ENCODE measurements at regions of chr20 and their contacts with region 1.

Region 1: GRCh38 chr20:38875175-38875993 is 50.8 kb upstream of the FAM83D start:
- DNase-seq: peak; percentile 60
- H3K4me3 Mint-ChIP-seq: peak overlapping the region; percentile 34
- H3K27ac Mint-ChIP-seq: peak overlapping the region; percentile 91
- H3K4me1 Mint-ChIP-seq: peaks cover 71% of the 10 kb centered on the region
- H3K27me3 Mint-ChIP-seq: no peaks in the 10 kb centered on the region

Region 2: DNA sequence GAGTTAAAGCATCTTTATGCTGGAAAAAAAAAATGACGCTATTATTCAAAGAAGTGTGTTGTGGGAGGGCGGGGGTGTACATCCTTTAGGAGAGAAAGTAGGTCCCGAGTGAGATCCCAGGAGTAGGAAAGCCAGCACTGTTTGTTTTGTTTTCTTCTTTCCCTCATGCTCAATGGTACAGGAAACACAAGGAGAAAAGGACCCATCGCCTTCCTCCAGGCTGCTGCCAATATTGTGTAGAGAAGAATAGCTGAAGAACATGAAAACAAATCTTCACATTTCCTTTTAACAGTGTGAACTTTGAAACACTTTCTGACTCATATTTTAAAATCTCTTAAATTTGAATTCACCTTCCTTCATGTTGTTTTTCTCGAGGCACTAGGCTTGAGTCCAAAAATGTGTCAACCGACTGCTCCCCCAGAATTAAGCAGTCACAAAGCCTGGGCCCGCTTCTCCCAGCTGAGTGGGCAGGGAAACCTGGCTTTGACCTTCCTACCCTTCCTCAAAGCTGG is 47.6 kb before region 1 on chr20:
- CTCF ChIA-PET with region 1: no interaction called
- intact Hi-C with region 1: loop called (anchors 1 kb)
- DNase-seq: peak; percentile 43
- H3K4me3 Mint-ChIP-seq: no peak overlapping the region
- H3K27ac Mint-ChIP-seq: peak overlapping the region; percentile 89
- H3K4me1 Mint-ChIP-seq: peaks cover 74% of the 10 kb centered on the region
- H3K27me3 Mint-ChIP-seq: no peaks in the 10 kb centered on the region

Region 3: DNA sequence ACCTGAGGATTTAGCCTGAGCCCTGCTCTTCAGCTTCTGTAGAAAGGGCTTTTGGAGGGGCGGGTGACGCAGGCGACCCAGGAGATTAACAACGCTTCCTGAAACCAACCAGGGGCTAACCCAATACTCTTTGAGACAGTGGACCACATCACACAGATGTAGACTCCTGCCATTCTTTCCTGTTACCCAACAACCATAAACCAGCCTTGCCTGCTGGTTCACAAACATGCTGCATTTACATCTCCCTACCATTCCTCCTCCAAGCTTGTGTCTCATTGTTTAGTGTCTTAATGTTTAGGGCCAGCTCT is 41.6 kb before region 1 on chr20:
- CTCF ChIA-PET with region 1: interaction called, 4 read pairs
- intact Hi-C with region 1: loop called (anchors 2 kb)
- DNase-seq: peak; percentile 50
- H3K4me3 Mint-ChIP-seq: no peak overlapping the region
- H3K27ac Mint-ChIP-seq: peak overlapping the region; percentile 73
- H3K4me1 Mint-ChIP-seq: peaks cover 60% of the 10 kb centered on the region
- H3K27me3 Mint-ChIP-seq: no peaks in the 10 kb centered on the region

Region 4: DNA sequence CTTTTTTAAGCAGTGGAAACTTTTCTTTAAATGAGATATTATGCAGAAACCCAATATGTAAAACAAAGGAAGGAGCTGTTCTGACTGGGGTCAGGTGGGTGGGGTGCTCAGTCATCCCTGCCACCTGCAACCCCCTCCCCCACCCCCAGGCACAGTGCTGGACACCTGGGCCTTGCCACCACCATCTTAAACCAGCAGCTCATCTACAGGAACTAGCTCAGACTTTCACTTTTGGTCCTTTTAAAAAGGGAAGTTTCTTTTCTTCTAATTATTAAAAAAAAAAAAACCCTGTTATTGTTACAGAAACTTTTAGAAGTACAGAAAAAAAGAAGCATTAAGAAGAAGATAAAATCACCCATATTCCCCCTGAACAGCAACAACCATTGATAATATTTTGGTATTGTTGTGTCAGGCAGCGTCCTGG is 32.8 kb before region 1 on chr20:
- CTCF ChIA-PET with region 1: interaction called, 4 read pairs
- intact Hi-C with region 1: loop called (anchors 1 kb)
- DNase-seq: peak; percentile 84
- H3K4me3 Mint-ChIP-seq: no peak overlapping the region
- H3K27ac Mint-ChIP-seq: peak overlapping the region; percentile 91
- H3K4me1 Mint-ChIP-seq: peaks cover 73% of the 10 kb centered on the region
- H3K27me3 Mint-ChIP-seq: no peaks in the 10 kb centered on the region

Region 5: DNA sequence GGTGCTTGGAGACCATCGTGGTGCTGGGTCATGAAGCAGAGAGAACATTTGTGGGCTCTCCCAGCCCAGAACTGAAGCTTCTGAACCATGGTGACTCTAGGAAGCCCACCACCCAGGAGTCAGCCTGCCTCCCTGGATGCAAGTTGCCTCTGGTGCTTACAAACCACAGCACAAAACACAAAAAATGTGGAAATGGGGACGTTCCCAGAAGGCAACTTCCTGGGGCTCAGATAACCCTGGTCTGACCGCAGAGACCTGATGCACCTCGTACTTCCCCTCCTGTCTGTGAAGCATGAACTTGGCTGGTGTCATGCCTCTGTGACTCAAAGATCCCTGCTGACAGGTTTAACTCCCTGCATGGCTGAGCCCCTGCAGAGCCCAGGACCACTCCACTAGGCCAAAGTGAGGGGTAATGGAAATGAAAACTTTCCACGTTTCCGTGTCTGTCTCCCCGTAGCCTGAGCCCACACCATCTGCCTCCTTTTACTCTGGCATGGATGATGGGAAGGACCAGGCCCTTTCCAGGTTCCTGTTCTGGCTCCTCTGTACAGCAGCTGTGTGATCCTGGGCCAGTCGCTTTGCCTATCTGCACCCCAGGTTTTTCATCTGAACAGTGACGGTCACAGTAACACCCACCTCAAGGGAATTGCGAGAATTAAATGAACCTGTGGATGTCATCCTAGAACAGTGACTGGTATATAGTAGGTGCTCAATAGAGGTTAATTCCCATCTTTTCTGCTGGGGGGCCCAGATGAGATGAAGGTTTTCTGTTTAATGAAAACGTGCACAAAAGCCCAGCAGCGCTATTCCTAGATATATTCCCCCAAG is 12.1 kb before region 1 on chr20:
- CTCF ChIA-PET with region 1: interaction called, 4 read pairs
- intact Hi-C with region 1: loop called (anchors 1 kb)
- DNase-seq: peak; percentile 81
- H3K4me3 Mint-ChIP-seq: peak overlapping the region; percentile 9
- H3K27ac Mint-ChIP-seq: peak overlapping the region; percentile 78
- H3K4me1 Mint-ChIP-seq: peaks cover 49% of the 10 kb centered on the region
- H3K27me3 Mint-ChIP-seq: no peaks in the 10 kb centered on the region

Region 6: DNA sequence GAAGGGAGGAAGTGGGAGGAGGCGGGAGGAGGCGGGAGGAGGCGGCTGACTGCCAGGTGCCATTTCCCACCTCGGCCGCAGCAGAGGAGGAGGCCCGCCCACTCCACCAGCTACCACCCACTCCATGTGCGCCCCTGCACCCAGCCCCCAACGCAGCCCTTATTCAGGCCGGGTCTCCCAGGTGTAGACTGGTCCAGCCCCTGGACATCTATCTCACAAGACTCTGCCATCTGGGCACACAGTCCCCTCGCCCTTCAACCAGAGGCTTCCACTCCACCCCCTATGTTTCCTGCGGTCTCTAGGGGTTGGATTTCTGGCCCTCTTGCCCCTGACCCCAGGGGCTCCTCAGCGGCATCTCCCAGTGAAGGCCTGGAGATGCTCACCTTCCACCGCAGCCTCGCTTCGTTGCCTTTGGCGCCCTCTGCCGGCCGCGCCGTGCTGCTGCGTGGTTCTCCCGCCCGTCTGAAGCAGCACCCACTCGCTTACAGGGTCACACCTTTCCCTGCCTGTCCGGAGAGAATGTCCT is 18.2 kb after region 1 on chr20:
- CTCF ChIA-PET with region 1: interaction called, 22 read pairs
- intact Hi-C with region 1: loop called (anchors 1 kb)
- DNase-seq: peak; percentile 85
- H3K4me3 Mint-ChIP-seq: no peak overlapping the region
- H3K27ac Mint-ChIP-seq: peak overlapping the region; percentile 42
- H3K4me1 Mint-ChIP-seq: peaks cover 33% of the 10 kb centered on the region
- H3K27me3 Mint-ChIP-seq: no peaks in the 10 kb centered on the region

Region 7: DNA sequence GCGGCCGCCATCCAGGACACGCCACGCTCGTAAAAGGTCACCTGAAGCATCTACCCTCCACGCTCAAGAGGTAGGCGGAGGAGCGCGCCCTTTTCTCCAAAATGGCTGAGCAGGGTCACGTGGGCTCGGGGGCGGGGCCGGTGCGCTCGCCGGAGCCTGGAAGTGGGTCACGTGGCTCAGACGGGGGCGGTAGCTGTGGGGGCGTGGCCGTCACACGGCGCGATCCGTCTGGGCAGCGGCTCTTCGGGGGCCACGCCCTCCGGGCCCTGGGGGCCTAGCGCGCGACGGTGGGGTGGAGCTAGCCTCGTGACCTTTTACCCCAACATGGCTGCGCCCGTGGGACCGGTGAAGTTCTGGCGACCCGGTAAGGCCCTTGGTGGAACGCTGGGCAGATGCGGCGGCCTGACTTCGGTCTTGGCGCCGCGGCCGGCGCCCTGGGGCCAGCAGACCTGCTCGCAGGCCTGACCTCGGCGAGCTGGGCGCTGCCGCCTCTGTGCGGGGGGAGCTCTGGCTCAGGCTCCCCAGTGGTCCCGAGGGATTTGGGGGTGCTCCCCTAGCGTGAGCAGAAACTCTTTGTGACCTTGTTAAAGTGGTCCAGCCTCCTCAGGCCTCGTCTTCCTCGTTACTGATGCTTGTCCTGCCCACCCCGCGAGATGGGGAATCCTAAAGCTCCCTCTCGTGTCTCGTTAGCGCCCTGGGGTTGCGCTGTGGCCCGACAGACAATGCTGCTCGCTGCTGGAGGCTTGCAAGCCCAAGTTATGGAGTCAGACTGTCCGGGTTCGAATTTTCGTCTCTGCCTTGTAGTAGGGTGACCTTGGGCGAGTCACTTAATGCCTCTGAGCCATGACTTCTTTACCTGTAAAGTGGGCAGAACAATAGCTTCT is 86.9 kb after region 1 on chr20 and contains the start of gene DHX35:
- CTCF ChIA-PET with region 1: no interaction called
- intact Hi-C with region 1: loop called (anchors 1 kb)
- DNase-seq: peak; percentile 99
- H3K4me3 Mint-ChIP-seq: peak within 1 kb of the TSS; percentile 95
- H3K27ac Mint-ChIP-seq: peak within 1 kb of the TSS; percentile 98
- H3K4me1 Mint-ChIP-seq: peaks cover 32% of the 10 kb centered on the region
- H3K27me3 Mint-ChIP-seq: no peaks in the 10 kb centered on the region
- total RNA-seq, gene DHX35: 9.5 to 10.3 TPM